ENCODE measurements at regions of chr5 and their contacts with region 1.

Region 1: GRCh38 chr5:150217873-150218692 is 28.2 kb downstream of the SLC6A7 start:
- DNase-seq: peak; percentile 89
- H3K4me3 ChIP-seq: no peak overlapping the region
- H3K27ac ChIP-seq: peak overlapping the region; percentile 75
- H3K4me1 ChIP-seq: peaks cover 6% of the 10 kb centered on the region
- H3K27me3 ChIP-seq: no peaks in the 10 kb centered on the region
- CTCF ChIP-seq: peak; percentile 96

Region 2: DNA sequence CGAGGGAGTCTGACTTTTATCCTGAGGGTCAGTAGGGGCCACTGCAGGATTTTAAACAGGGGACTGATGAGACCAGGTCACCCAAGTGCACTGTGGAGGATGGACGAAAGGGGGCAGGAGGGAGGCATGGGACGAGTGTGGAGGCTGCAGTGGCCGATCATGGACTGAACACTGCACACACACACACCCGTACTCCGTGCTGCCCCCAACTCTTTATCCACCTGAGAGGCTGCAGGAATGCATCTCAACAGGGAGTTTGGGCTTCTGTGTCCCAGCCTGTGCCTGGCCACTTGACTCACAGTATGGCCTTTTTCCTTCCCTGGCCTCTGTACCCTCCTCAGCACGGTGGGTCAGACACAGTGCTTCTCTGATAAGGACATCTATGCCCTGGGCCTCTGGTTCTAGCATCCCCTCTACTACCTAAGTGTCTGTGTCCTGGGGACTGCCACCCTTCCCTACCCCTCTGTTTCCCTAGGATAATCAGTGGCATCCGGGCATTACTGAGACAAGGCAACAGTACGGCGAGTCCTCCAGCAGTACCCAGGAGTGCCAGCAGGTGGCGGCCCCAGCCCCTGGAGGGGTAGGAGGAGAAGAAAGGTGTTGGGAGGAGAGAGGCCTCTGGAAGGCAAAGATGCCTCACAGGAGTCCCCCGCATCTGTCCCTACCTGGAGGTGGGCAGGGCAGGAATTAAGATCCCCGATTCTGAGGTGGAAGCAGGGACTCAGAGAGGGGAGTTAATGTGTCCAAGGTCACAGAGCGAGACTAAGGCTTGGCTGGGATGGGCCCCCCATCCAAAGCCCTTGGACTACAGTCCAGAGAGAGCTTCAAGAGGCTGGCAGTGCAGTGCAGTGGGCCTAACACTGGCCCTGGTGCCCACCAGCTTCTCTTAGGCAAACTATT is 56.6 kb before region 1 on chr5:
- intact Hi-C with region 1: loop called (anchors 1 kb)
- DNase-seq: peak; percentile 98
- H3K4me3 ChIP-seq: no peak overlapping the region
- H3K27ac ChIP-seq: peak overlapping the region; percentile 89
- H3K4me1 ChIP-seq: peaks cover 20% of the 10 kb centered on the region
- H3K27me3 ChIP-seq: no peaks in the 10 kb centered on the region
- CTCF ChIP-seq: peak; percentile 84

Region 3: GRCh38 chr5:150419630-150420270 is 201.7 kb after region 1 on chr5:
- intact Hi-C with region 1: no loop called
- DNase-seq: no peak
- H3K4me3 ChIP-seq: no peak overlapping the region
- H3K27ac ChIP-seq: no peak overlapping the region
- H3K4me1 ChIP-seq: no peaks in the 10 kb centered on the region
- H3K27me3 ChIP-seq: no peaks in the 10 kb centered on the region
- CTCF ChIP-seq: no peak

Region 4: GRCh38 chr5:150436141-150436680 is 218.1 kb after region 1 on chr5:
- intact Hi-C with region 1: loop called (anchors 10 kb)
- DNase-seq: peak; percentile 92
- H3K4me3 ChIP-seq: no peak overlapping the region
- H3K27ac ChIP-seq: no peak overlapping the region
- H3K4me1 ChIP-seq: peaks cover 3% of the 10 kb centered on the region
- H3K27me3 ChIP-seq: no peaks in the 10 kb centered on the region
- CTCF ChIP-seq: peak; percentile 88